MCF 10A (cell line): ENCODE measurements at regions of chr20 and their contacts with region 1.

Region 1: GRCh38 chr20:43942661-43943290 is 28.1 kb downstream of the TOX2 start:
- DNase-seq: peak; percentile 64
- H3K4me3 Mint-ChIP-seq: no peak overlapping the region
- H3K27ac Mint-ChIP-seq: peak overlapping the region; percentile 71
- H3K4me1 Mint-ChIP-seq: peaks cover 42% of the 10 kb centered on the region
- H3K27me3 Mint-ChIP-seq: no peaks in the 10 kb centered on the region
- CTCF ChIP-seq: no peak

Region 2: DNA sequence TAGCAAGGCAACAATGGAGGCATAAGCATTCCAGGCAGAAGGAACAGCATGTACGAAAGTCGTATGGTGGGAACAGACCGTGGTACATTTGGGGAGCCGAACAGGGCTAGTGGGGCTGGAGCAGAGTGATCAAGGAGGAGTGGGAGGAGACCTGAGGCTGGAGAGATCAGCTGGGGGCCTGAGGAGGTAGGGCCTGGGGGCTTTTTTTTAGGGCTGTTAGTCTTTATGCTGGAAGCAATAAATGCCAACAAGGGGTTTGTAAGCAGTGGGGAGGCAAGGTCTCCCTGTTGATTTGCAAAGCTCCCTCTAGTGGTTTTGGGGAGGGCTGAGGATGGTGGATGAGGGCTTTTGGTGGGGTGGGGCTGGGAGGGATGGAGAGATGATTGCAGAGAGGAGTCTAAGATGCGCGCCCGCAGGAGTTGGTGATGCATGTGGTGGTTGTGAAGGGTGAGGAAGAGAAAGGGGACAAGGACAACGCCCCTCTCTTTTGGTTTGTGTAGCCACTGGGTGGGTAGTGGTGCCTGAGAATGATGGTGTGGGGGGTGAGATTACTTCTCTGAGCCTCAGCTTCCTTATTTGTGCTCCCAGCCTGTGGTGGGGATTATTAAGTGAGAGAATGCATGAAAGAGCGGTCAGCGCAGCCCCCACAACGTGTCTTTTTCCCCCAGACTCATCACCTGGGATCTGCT is 102.2 kb before region 1 on chr20:
- CTCF ChIA-PET with region 1: no interaction called
- POLR2A ChIA-PET with region 1: interaction called, 4 read pairs
- intact Hi-C with region 1: loop called (anchors 10 kb)
- DNase-seq: peak; percentile 53
- H3K4me3 Mint-ChIP-seq: no peak overlapping the region
- H3K27ac Mint-ChIP-seq: no peak overlapping the region
- H3K4me1 Mint-ChIP-seq: peaks cover 20% of the 10 kb centered on the region
- H3K27me3 Mint-ChIP-seq: no peaks in the 10 kb centered on the region
- CTCF ChIP-seq: peak; percentile 37

Region 3: DNA sequence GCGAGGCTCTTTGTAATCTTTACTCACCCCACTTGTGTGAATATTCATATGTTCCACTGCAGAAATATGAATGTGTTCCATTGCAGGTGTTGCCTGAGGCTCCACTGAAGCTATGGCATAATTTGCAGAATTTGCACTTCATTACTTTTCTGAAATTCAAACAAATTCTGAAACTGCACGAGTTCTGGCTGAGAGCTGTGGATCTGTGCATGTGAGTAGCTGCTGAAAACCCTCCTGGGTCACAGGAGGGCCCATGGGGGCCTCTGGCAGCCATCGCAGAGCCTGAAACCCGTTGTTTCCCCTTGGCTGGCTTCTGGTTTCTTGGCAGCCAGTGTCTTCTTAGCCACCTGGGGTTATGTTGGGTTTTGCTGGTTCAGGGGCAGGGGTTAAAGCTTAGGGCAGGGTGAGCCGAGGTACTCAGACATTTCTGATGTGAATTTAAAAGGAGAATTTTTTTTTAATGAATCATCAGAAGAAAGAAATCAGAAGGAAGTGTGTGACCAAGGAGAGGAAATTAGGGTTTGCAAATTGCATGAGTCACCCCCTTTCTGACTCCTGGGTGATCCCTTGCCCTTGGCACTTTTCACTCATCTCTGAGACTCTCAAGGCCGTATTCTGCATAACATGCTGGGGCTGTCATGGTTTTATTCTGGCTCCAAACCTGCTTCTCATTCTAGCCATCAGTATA is 12.4 kb after region 1 on chr20:
- CTCF ChIA-PET with region 1: interaction called, 11 read pairs
- POLR2A ChIA-PET with region 1: interaction called, 28 read pairs
- intact Hi-C with region 1: loop called (anchors 1 kb)
- DNase-seq: peak; percentile 96
- H3K4me3 Mint-ChIP-seq: no peak overlapping the region
- H3K27ac Mint-ChIP-seq: no peak overlapping the region
- H3K4me1 Mint-ChIP-seq: peaks cover 43% of the 10 kb centered on the region
- H3K27me3 Mint-ChIP-seq: no peaks in the 10 kb centered on the region
- CTCF ChIP-seq: no peak

Region 4: GRCh38 chr20:43975096-43975768 is 32.5 kb after region 1 on chr20:
- CTCF ChIA-PET with region 1: interaction called, 4 read pairs
- POLR2A ChIA-PET with region 1: interaction called, 7 read pairs
- intact Hi-C with region 1: loop called (anchors 1 kb)
- DNase-seq: peak; percentile 86
- H3K4me3 Mint-ChIP-seq: no peak overlapping the region
- H3K27ac Mint-ChIP-seq: peak overlapping the region; percentile 75
- H3K4me1 Mint-ChIP-seq: peaks cover 16% of the 10 kb centered on the region
- H3K27me3 Mint-ChIP-seq: no peaks in the 10 kb centered on the region
- CTCF ChIP-seq: no peak

Region 5: DNA sequence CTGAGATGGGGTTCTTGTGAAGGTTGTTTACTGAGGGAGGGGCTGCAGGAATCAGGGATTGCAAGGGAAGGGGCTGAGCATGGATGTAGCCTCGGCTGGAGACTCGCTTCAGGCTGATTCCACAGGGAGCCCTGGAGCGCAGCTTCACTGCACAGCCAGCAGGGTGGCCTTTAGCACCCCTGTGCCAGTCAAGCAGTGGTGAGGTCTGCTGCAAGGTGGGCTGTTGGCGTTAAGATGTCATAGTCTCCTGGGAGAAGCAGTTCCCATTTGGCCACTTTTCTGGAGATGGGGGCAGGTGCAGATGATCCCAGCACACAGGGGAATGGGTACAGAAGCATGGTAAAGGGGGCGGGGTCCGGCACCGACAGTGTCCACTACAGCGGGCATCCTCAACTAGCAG is 98.2 kb after region 1 on chr20:
- CTCF ChIA-PET with region 1: no interaction called
- POLR2A ChIA-PET with region 1: no interaction called
- intact Hi-C with region 1: no loop called
- DNase-seq: no peak
- H3K4me3 Mint-ChIP-seq: no peak overlapping the region
- H3K27ac Mint-ChIP-seq: no peak overlapping the region
- H3K4me1 Mint-ChIP-seq: no peaks in the 10 kb centered on the region
- H3K27me3 Mint-ChIP-seq: peaks cover 34% of the 10 kb centered on the region
- CTCF ChIP-seq: no peak